Activated naive CD4-positive, alpha-beta T cell treated with anti-CD3 and anti-CD28 coated beads for 36 hours (primary cell): ENCODE measurements at regions of chr12 and their contacts with region 1.

Region 1: GRCh38 chr12:71415336-71416231 is 24.0 kb upstream of the LGR5 start:
- DNase-seq: peak; percentile 46
- H3K4me3 Mint-ChIP-seq: no peak overlapping the region
- H3K27ac Mint-ChIP-seq: no peak overlapping the region
- H3K4me1 Mint-ChIP-seq: no peaks in the 10 kb centered on the region
- H3K27me3 Mint-ChIP-seq: peaks cover 8% of the 10 kb centered on the region

Region 2: GRCh38 chr12:71354871-71355270 is 60.7 kb before region 1 on chr12:
- CTCF ChIA-PET with region 1: no interaction called
- intact Hi-C with region 1: no loop called
- DNase-seq: no peak
- H3K4me3 Mint-ChIP-seq: no peak overlapping the region
- H3K27ac Mint-ChIP-seq: no peak overlapping the region
- H3K4me1 Mint-ChIP-seq: no peaks in the 10 kb centered on the region
- H3K27me3 Mint-ChIP-seq: peaks cover 9% of the 10 kb centered on the region

Region 3: GRCh38 chr12:71551529-71551928 is 135.9 kb after region 1 on chr12:
- CTCF ChIA-PET with region 1: interaction called, 3 read pairs
- intact Hi-C with region 1: loop called (anchors 1 kb)
- DNase-seq: no peak
- H3K4me3 Mint-ChIP-seq: no peak overlapping the region
- H3K27ac Mint-ChIP-seq: no peak overlapping the region
- H3K4me1 Mint-ChIP-seq: no peaks in the 10 kb centered on the region
- H3K27me3 Mint-ChIP-seq: no peaks in the 10 kb centered on the region